ENCODE measurements at regions of chr4 and their contacts with region 1.

Region 1: GRCh38 chr4:141133146-141133998 is at the start of gene RNF150:
- DNase-seq: peak; percentile 96
- H3K4me3 ChIP-seq: peak within 1 kb of the TSS; percentile 78 to 95 (median 90)
- H3K27ac ChIP-seq: peak within 1 kb of the TSS; percentile 89 to 95 (median 92)
- H3K4me1 ChIP-seq: peaks cover 11 to 41% (median 37%) of the 10 kb centered on the region in 4 donors
- H3K27me3 ChIP-seq: no peaks in the 10 kb centered on the region
- CTCF ChIP-seq: peak; percentile 64 to 73 (median 71)
- EP300 ChIP-seq: no peak
- POLR2A ChIP-seq: no peak
- total RNA-seq, gene RNF150: 33.1 to 53.3 (median 43.6) TPM

Region 2: DNA sequence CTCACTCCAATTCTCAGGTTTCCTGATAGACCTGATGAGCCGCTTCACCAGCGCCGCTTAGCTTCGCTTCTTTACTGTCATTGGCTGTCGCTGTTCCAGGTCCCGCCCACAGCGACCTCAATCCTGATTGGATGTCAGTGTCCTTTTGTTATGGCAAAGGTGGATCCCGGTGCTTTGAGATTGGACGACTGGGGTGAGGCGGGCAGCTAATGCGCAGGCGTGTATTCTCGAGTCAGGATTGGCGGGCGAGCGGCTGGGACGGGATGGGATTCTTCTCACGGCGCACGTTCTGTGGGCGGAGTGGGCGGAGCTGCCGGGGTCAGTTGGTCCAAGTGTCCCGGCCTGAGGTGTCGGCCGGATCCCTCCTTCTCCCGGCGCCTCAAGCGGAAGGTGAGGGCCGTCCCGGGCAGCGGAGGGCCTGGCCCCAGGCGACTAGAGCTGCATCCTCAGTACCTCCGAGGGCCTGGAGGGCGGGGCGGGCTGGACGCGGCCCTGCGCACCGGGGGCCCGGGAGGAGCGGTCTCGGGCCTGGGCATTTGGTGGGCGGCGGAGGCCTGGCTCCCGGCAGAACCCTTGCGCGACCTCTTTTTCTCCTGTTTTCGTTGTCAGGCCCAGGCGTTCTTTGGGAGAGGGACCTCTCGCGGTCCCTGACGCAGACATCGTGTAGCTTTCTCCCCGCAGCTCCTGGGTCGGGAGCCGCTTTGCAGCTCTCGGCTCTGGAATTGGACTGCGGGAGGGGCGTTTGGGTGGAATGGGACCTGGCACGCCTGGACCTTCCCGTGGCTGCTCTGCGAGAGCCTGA is 759.8 kb before region 1 on chr4 and contains the start of gene SCOC:
- intact Hi-C with region 1: loop called (anchors 10 kb)
- DNase-seq: peak; percentile 100
- H3K4me3 ChIP-seq: peak within 1 kb of the TSS; percentile 82 to 97 (median 86)
- H3K27ac ChIP-seq: peak within 1 kb of the TSS; percentile 91 to 98 (median 95)
- H3K4me1 ChIP-seq: peaks cover 18 to 48% (median 45%) of the 10 kb centered on the region in 4 donors
- H3K27me3 ChIP-seq: no peaks in the 10 kb centered on the region
- CTCF ChIP-seq: no peak
- EP300 ChIP-seq: no peak
- POLR2A ChIP-seq: no peak
- total RNA-seq, gene SCOC: 39.8 to 64.4 (median 55.0) TPM

Region 3: GRCh38 chr4:140806163-140806562 is 327.2 kb before region 1 on chr4:
- intact Hi-C with region 1: no loop called
- DNase-seq: no peak
- H3K4me3 ChIP-seq: no peak overlapping the region
- H3K27ac ChIP-seq: no peak overlapping the region
- H3K4me1 ChIP-seq: peaks cover 0 to 16% (median 13%) of the 10 kb centered on the region in 4 donors
- H3K27me3 ChIP-seq: no peaks in the 10 kb centered on the region
- CTCF ChIP-seq: no peak
- EP300 ChIP-seq: no peak
- POLR2A ChIP-seq: no peak

Region 4: DNA sequence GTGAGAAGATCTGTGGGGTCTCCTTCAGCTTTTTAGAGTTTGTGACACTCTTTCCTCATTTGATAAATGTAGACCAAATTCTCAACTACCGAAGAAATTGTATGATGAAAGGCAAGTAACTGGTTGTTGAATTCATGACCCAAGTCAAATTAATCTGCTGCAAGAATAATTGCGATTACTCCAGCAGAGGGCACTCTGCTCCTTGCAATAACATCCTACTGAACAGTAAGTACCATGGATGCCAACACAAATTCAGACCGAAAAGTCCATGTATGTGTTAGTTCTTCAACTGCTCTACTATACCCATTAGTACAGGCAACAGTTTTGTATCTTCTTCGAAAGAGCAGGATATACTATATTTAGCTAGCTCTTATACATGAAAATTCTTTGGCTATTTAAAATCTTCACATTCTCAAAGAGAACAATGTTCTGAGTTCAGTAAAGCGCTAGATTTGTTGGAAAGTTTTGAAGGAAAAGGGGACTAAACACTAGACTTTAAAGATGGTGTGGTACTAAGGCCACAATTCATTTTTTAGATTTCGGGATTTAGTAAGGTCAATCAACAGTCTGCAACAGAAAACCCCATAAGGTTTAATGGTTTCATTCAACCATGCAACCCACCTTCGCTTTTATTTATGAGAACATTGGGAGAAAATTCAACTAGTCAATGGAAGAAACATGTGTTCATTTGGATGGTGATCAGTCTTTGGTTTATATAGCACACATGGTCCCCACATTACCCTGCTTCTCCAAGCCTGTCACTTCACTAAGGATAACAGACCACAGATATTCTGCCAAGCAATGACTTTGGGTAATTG is 271.8 kb before region 1 on chr4:
- intact Hi-C with region 1: loop called (anchors 1 kb)
- DNase-seq: no peak
- H3K4me3 ChIP-seq: no peak overlapping the region
- H3K27ac ChIP-seq: no peak overlapping the region
- H3K4me1 ChIP-seq: peaks cover 2 to 47% (median 36%) of the 10 kb centered on the region in 4 donors
- H3K27me3 ChIP-seq: no peaks in the 10 kb centered on the region
- CTCF ChIP-seq: peak; percentile 74 to 77 (median 77)
- EP300 ChIP-seq: no peak
- POLR2A ChIP-seq: no peak

Region 5: DNA sequence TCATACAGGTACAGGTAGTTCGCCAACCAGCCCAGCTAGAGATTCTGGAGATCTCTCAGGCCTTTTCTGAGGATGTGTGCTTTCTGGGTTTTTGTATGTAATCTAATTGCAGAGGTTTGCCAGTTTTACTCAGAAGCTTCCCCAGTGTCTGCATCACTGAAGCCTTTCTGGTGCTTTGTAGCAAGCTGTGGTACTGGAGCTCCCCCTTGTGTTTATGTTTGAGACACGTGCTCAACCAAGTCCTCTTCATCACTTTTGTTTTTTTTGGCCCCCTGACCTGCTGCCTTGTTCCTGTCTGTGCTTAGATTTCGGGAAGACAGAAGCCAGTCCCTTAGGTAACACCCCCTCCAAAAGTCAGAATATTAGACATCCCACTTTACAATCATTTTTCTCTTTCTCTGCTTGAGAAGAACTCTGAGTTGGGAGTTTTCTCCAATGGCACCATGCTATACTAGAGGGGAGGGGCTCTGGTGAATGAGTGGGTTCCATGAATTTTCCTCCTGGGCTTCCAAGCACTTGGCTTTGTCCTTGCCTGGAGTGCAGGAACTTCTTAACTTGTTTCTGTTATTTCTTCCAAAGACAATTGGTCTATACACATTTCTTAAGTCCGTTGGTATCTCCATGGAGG is 248.8 kb before region 1 on chr4:
- intact Hi-C with region 1: loop called (anchors 5 kb)
- DNase-seq: peak; percentile 89
- H3K4me3 ChIP-seq: no peak overlapping the region
- H3K27ac ChIP-seq: no peak overlapping the region
- H3K4me1 ChIP-seq: peaks cover 0 to 14% (median 9%) of the 10 kb centered on the region in 4 donors
- H3K27me3 ChIP-seq: no peaks in the 10 kb centered on the region
- CTCF ChIP-seq: peak; percentile 57 to 61 (median 59)
- EP300 ChIP-seq: no peak
- POLR2A ChIP-seq: no peak

Region 6: DNA sequence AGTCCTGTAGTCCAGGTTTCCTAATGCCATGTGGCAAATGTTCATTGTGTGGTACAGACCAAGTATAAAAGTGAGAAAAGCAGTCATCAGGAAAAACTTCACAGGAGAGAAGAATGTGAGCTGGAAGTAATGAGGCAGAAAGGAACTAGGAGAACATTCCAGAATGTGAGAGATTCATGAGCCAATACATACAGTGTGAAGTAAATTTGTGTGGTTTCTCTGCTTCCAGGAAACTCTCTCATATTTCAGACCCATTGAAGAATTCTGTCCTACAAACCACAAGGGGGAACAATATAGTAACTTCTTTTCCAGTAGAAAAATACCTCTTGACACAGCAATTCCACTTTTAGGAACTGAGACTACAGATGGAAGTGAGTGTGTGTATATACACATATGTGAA is 136.6 kb before region 1 on chr4:
- intact Hi-C with region 1: loop called (anchors 5 kb)
- DNase-seq: no peak
- H3K4me3 ChIP-seq: no peak overlapping the region
- H3K27ac ChIP-seq: peak overlapping the region; percentile 57 to 77 (median 71)
- H3K4me1 ChIP-seq: peaks cover 28 to 65% (median 53%) of the 10 kb centered on the region in 4 donors
- H3K27me3 ChIP-seq: no peaks in the 10 kb centered on the region
- CTCF ChIP-seq: peak in 1 of 3 experiments; percentile 40
- EP300 ChIP-seq: peak; percentile 51
- POLR2A ChIP-seq: no peak

Region 7: DNA sequence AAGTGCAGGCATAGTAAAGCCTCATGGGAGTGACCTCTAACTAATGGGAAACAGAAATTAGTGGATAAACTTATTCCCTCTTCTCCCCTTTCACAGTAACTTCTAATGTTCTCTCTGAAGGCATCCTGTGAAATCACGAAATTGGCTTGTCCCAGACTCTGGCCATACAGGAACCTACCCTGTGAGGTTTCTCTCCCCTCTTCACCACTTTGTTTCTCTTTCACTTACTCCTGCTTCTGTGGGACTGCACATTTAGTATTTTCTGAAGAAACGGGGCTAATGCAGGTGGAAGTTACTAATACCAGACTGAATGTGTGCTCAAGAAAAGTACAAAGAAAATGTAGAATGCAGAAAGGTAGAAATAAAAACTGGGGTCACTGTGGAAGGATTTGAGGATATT is 107.3 kb after region 1 on chr4:
- intact Hi-C with region 1: no loop called
- DNase-seq: no peak
- H3K4me3 ChIP-seq: no peak overlapping the region
- H3K27ac ChIP-seq: no peak overlapping the region
- H3K4me1 ChIP-seq: no peaks in the 10 kb centered on the region
- H3K27me3 ChIP-seq: no peaks in the 10 kb centered on the region
- CTCF ChIP-seq: no peak
- EP300 ChIP-seq: no peak
- POLR2A ChIP-seq: no peak

Region 8: DNA sequence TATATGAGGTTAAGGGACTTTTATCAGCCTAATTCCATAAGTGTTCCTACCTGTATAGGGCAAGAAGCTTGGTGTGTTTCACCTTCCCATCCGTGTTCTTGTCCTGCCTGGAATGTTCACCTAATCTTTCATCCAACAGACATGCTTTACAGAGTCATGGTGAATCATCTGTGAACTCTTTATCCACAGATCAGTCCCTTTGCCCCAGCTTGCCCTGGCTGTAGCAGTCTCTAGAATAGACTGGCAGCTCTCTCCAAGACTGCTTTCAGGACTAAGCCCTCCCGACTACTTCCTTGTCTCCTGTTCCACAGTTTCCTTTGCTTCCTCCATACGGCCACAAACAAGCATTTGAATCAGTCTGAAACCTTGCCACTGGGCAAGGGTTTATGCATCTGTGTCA is 325.1 kb after region 1 on chr4:
- intact Hi-C with region 1: no loop called
- DNase-seq: no peak
- H3K4me3 ChIP-seq: no peak overlapping the region
- H3K27ac ChIP-seq: no peak overlapping the region
- H3K4me1 ChIP-seq: no peaks in the 10 kb centered on the region
- H3K27me3 ChIP-seq: no peaks in the 10 kb centered on the region
- CTCF ChIP-seq: no peak
- EP300 ChIP-seq: no peak
- POLR2A ChIP-seq: no peak

Region 9: GRCh38 chr4:142645475-142646108 is 1512.2 kb after region 1 on chr4:
- intact Hi-C with region 1: no loop called
- DNase-seq: no peak
- H3K4me3 ChIP-seq: no peak overlapping the region
- H3K27ac ChIP-seq: no peak overlapping the region
- H3K4me1 ChIP-seq: peaks cover 0 to 9% (median 0%) of the 10 kb centered on the region in 4 donors
- H3K27me3 ChIP-seq: no peaks in the 10 kb centered on the region
- CTCF ChIP-seq: no peak
- EP300 ChIP-seq: no peak
- POLR2A ChIP-seq: no peak